Cardiac septum (tissue), 1 donor: ENCODE measurements at regions of chr21 and their contacts with region 1.

Region 1: DNA sequence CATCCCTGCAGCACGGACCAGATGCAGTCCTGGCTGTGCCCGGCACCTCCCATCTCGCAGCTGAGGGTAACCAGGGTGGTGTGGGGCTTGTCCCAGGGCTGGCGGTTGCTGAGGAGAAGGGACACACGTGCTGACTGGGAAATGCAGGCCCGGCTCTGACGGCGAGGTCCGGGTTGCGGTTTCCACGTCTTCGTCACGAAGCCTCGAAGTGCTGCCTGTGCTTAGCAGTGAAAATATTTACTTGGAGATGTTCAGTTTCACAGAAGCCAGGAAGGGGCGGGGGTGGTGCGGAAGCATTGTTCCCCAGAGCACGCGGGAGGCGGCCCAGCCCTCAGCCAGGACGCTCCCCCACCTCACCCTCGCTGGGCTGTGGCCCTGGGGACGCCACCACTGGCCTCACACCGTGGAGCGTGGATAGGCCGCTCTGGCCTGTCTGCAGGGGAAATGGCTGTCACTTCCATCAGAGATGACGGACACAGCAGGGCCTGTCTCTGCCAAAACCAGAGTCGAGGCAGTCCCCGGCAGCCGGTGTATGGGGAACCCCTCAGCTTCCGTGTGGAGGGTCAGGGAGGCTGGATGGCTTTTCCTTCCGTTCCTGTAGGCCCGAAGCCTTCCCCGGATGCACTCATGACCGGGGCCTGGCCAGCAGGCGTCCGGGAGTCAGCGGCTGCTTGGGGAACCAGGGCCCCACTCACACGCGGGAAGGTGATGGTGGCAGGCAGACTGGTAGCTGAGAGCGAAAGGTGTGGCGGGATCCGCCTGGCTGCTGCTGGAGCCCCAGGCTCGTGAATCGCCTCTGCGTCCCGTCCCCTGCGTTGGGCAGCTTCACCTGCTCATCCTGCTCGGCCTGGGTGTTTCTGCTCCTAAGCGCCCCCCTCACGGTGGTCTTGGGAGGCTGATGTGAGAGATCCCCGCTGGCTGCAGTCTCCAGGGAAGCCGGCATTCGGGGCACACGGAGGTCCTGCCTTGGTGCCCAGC is 14.7 kb upstream of the POFUT2 start:
- DNase-seq: peak; percentile 88

Region 2: DNA sequence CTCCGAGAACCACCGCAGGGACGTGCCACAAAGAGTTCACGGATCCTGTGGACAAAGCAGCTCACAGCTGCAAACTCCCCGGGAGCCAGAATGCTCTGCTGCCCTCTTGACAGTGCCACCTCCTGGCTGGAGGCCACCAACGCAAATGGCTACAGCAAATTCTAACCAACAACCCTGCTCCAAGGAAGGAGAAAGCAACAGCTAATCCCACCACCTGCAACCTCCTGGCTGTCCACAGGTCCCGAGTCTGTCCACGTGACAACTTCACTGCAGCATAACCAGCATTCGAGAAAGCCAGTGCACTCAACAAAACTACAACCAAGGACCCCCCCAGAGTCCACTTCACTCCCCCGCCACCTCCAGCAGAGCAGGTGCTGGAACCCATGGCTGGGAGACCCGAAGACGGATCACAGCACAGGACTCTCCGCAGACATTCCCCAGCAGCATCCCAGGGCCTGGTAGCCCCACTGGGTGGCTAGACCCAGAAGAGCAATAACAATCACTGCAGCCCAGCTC is 32.0 kb before region 1 on chr21:
- intact Hi-C with region 1: no loop called
- DNase-seq: peak; percentile 31

Region 3: GRCh38 chr21:45357436-45358260 is 55.3 kb after region 1 on chr21:
- intact Hi-C with region 1: loop called (anchors 2 kb)
- DNase-seq: no peak

Region 4: DNA sequence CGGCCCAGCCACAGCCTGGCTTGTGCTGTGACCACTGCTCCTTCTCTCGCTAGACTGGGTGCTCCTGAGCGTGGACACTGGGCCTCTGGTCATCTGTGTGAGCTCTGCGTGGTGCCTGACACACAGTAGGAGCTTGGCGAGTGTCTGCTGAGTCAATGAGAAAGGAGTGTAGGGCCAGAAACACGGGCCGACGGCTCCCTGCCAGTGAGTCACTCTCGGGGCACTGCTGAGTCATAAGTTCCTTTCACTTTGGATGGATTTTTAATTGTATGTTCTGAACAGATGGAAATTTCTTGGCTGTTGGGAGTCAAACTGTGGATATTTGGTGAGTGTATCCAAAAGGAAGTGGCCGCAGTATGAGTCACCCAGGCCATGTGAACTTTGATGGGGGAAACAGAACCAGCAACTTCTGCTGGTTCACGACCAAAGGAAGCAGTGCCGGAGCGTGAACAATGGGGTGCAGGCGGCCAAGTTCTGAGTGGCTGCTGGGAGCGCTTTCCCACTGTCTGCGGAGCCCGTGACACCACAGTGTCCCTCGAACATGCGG is 61.6 kb after region 1 on chr21:
- intact Hi-C with region 1: loop called (anchors 2 kb)
- DNase-seq: peak; percentile 92

Region 5: DNA sequence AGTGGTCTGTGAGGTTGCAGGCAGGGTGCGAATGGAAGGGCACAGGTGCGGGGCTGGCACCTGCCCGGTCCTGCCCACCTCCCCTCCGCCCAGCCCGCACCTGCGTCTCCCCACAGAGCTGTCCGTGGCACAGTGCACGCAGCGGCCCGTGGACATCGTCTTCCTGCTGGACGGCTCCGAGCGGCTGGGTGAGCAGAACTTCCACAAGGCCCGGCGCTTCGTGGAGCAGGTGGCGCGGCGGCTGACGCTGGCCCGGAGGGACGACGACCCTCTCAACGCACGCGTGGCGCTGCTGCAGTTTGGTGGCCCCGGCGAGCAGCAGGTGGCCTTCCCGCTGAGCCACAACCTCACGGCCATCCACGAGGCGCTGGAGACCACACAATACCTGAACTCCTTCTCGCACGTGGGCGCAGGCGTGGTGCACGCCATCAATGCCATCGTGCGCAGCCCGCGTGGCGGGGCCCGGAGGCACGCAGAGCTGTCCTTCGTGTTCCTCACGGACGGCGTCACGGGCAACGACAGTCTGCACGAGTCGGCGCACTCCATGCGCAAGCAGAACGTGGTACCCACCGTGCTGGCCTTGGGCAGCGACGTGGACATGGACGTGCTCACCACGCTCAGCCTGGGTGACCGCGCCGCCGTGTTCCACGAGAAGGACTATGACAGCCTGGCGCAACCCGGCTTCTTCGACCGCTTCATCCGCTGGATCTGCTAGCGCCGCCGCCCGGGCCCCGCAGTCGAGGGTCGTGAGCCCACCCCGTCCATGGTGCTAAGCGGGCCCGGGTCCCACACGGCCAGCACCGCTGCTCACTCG is 829.7 kb after region 1 on chr21:
- intact Hi-C with region 1: no loop called
- DNase-seq: no peak